T-cell (primary cell): ENCODE measurements at regions of chr19 and their contacts with region 1.

Region 1: DNA sequence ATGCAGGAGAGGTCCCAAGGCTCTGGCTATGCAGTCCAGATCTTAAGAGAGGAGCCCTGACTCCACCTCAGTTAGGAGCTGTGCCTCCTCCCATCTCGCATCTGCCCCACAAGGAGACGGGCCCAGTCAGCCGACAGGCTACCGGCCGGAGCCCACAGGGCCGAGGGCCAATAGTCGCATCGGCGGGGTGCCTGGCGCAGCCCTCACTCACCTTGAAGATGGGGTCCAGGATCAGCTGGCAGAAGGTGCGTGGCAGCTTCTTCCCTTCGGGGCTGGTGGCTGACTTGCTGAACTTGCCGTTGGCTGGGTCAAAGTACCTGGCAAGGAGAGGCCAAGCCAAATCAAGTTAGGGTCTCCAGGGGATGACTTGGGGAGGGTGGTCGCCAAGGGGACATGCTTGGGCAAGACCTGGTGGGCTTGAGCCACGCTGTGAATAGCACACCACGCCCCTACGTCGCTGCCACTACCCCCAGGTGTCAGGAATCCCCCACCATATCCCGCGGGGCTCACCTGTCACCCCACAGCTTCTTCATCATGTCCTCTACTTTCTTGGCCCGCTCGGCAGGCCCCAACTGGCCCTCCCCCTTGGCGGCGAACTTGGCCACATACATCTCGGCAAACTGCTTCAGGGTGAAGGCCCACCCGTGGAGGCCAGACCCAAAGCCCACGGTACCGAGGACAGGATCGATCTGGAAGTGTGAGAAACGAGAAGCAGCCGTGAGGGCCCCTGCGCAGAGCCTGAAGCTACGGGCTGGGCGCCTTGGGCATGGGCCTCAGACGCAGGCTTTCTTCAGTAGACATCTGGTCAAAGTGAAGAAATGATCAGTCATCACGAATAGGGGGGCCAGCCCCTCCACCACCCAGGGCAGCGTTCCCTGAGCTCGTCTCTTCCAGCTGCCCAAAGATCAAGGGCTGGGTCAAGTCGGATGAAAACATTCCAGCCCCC is 3.3 kb downstream of the EEF2 start:
- DNase-seq: peak in 1 of 35 experiments; percentile 16
- ATAC-seq: no peak
- H3K4me3 ChIP-seq: peak overlapping the region in 1 of 2 donors; percentile 6
- H3K4me3 Mint-ChIP-seq: peak overlapping the region; percentile 17 to 92 (median 39)
- H3K27ac ChIP-seq: no peak overlapping the region
- H3K27ac Mint-ChIP-seq: no peak overlapping the region
- H3K4me1 ChIP-seq: peaks cover 25 to 62% of the 10 kb centered on the region in 2 experiments
- H3K4me1 Mint-ChIP-seq: peaks cover 51 to 57% (median 56%) of the 10 kb centered on the region in 3 donors
- H3K27me3 ChIP-seq: no peaks in the 10 kb centered on the region
- H3K27me3 Mint-ChIP-seq: no peaks in the 10 kb centered on the region

Region 2: GRCh38 chr19:4007021-4007835 is 25.2 kb after region 1 on chr19 and contains the start of gene PIAS4:
- CTCF ChIA-PET with region 1: interaction called in 1 of 2 experiments, 6 read pairs
- POLR2A ChIA-PET with region 1: interaction called in 1 of 2 experiments, 13 read pairs
- DNase-seq: peak; percentile 91 to 98 (median 95)
- ATAC-seq: peak; percentile 89 to 94 (median 90)
- H3K4me3 ChIP-seq: peak within 1 kb of the TSS; percentile 60 to 80
- H3K4me3 Mint-ChIP-seq: peak within 1 kb of the TSS; percentile 78 to 83 (median 82)
- H3K27ac ChIP-seq: peak within 1 kb of the TSS; percentile 34
- H3K27ac Mint-ChIP-seq: peak within 1 kb of the TSS; percentile 59 to 83
- H3K4me1 ChIP-seq: peaks cover 6 to 48% of the 10 kb centered on the region in 2 experiments
- H3K4me1 Mint-ChIP-seq: peaks cover 23 to 34% (median 33%) of the 10 kb centered on the region in 3 donors
- H3K27me3 ChIP-seq: no peaks in the 10 kb centered on the region
- H3K27me3 Mint-ChIP-seq: no peaks in the 10 kb centered on the region
- total RNA-seq, gene PIAS4: 21.8 to 42.6 (median 31.4) TPM